WTC11 (cell line): ENCODE measurements at regions of chr4 and their contacts with region 1.

Region 1: DNA sequence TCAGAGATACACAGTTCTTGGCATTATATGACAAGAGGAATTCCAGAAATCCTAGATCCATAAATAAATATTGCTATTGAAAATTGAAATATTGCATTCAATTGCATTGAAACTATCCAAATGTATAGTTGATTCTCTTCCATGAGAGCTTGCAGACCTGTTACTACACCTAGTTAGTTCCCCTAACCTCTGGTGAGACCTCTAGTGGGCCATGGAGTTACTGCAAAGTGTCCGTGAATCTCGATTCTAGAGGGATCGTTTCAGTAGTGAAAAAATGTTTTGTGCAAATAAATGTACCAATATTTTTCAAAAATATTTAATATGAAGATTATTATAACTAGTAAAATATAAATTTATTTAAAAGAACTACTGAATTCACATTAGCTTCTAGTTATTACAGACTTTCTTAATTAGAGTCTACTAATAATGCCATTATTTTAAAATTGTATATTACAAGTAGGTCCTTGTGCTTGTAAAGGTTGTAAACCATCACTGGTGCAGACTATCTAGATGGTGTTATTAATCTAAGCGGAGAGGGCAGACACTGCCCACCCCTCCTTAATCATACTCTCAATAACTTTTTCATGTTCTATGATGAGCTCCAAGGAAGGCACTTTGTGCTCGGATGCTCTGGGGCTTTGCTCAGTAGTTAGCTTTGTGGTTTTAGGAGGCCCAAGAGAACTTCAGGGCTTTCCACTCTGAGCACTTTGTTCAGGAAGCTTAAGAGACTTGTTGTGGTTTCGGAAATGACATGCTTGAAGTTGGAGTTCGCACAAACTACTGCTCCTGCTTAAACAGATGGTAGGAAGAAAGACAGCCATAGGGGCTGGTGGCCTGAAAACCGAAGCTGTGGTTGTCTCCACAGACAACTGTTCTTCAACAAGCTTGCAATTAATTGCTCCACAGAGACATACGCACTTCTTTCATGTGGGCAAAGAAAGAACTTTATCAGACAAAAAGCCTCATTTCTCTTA is 42.8 kb downstream of the IL21 start:
- DNase-seq: peak; percentile 63
- ATAC-seq: peak; percentile 84
- H3K4me3 Mint-ChIP-seq: no peak overlapping the region
- H3K27ac Mint-ChIP-seq: no peak overlapping the region
- H3K4me1 Mint-ChIP-seq: no peaks in the 10 kb centered on the region
- H3K27me3 Mint-ChIP-seq: peaks cover 11% of the 10 kb centered on the region; the same call in 1 of the 2 replicates
- CTCF ChIP-seq: peak; percentile 58

Region 2: DNA sequence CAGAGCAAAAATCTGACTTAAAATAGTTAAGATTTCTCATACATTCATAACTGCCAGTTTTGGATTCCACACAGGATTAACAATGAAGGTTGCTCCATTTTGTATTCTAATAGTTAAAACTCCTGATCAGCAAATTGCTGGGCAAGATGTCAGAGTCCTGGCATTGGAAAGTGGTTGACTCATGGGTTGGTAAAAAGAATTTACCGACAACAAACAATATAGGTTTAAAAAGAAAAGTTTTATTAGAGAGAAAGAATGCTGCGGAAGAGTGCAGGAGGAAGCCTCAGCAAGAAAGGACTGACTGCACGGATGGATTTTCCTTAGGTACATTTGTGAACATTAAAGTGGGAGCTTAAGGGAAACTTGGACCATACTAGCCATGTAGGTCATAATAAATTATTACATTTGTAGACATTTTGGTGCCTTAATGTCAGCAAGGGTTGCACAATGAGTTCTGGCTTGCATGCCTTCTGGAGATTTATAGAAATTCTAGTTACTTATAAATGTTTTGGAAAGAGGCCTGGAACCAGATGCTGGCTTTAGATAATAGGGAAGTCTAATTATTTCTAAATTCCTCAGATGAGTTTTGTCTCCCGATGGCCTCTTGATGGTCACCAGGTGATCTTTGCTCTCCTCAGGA is 96.2 kb before region 1 on chr4:
- CTCF ChIA-PET with region 1: no interaction called
- POLR2A ChIA-PET with region 1: no interaction called
- DNase-seq: no peak
- ATAC-seq: no peak
- H3K4me3 Mint-ChIP-seq: no peak overlapping the region
- H3K27ac Mint-ChIP-seq: no peak overlapping the region
- H3K4me1 Mint-ChIP-seq: no peaks in the 10 kb centered on the region
- H3K27me3 Mint-ChIP-seq: no peaks in the 10 kb centered on the region
- CTCF ChIP-seq: no peak

Region 3: DNA sequence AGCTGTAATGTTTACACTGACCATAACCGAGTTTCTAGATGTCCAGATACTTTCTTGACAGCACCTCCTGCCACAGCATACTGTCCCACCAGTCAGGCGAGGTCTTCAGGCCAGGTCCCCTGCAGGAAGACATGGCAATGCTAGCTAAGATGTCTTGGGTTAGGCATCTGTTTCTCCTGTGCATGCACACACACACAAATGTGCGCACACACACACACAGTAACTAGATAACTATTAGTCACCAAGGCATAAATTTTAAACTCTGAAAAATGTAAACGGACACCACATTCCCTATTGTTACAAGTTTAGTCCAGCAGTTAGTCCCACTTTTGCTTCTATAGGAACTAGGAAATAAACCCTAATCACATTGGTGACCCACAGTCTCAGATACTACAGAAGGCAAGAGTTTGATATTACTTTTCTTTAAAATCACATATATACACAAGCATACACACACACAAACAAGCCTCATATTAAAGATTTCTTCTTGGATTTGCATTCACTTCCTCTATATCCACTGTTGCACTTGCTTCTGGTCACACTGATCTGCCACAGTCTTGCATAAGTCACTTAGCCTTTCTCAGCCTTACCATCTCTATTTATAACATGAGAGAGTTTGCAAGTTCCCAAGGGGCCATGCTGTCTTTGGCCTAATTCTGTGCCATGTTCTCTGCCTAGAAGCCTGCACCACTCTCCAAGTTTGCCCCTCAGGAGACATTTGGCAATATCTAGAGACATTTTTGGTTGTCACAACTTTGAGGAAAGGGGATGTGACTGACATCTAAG is 10.6 kb after region 1 on chr4:
- CTCF ChIA-PET with region 1: interaction called, 10 read pairs
- POLR2A ChIA-PET with region 1: no interaction called
- DNase-seq: no peak
- ATAC-seq: no peak
- H3K4me3 Mint-ChIP-seq: no peak overlapping the region
- H3K27ac Mint-ChIP-seq: no peak overlapping the region
- H3K4me1 Mint-ChIP-seq: no peaks in the 10 kb centered on the region
- H3K27me3 Mint-ChIP-seq: no peaks in the 10 kb centered on the region; the same call in 1 of the 2 replicates
- CTCF ChIP-seq: no peak